B cell (primary cell): ENCODE measurements at regions of chr2 and their contacts with region 1.

Region 1: DNA sequence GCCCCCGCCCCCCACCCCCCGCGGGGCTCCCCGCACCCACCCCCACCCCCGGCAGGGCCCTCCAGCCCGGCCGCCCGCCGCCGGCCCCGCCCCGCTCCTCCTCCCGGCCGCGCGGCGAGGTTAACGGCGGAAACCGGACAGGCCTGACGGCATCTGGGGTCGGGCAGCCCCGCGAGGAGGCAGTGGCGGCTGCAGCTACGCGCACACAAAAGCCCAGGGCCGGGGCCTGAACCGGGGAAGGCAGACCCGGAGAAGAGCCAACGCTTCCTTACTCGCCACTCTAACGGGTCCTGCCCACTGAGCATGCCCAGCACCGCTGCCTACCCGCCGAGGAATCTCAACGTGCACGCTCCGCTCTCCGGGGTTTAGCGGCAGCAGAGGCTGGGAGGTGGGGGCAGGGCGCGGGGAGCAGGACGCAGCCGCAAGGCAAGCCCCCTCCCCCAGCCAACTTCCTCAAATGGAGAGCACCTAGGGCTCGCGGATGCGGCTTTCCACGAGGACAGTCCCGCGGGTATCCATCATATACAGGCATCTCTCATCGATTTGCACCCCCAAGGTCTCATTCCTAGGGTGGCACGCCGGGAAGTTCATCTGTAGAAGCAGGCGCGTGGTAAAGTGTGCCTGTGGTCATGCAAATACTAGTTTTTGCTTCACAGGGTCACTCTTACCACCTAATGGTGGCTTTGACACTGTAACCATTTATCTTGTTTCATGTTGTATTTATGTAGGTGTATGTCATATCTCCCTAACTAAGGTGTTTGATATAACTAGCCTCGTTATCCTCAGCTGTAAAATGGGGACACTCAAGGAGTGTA is at the start of gene MEMO1:
- DNase-seq: peak; percentile 98
- ATAC-seq: peak; percentile 75
- H3K4me3 ChIP-seq: peak within 1 kb of the TSS; percentile 72 to 98 (median 80)
- H3K4me3 Mint-ChIP-seq: peak within 1 kb of the TSS; percentile 98
- H3K27ac ChIP-seq: peak within 1 kb of the TSS; percentile 80 to 94
- H3K27ac Mint-ChIP-seq: peak within 1 kb of the TSS; percentile 99
- H3K4me1 ChIP-seq: peaks cover 29% of the 10 kb centered on the region in 2 donors
- H3K4me1 Mint-ChIP-seq: peaks cover 39% of the 10 kb centered on the region
- H3K27me3 ChIP-seq: no peaks in the 10 kb centered on the region
- H3K27me3 Mint-ChIP-seq: no peaks in the 10 kb centered on the region
- CTCF ChIP-seq: no peak
- total RNA-seq, gene MEMO1: 64.2 and 65.8 TPM in 2 replicates

Region 2: GRCh38 chr2:31980674-31981356 is 30.1 kb before region 1 on chr2:
- CTCF ChIA-PET with region 1: no interaction called
- POLR2A ChIA-PET with region 1: no interaction called
- intact Hi-C with region 1: loop called (anchors 1 kb)
- DNase-seq: peak; percentile 85
- ATAC-seq: peak; percentile 100
- H3K4me3 ChIP-seq: peak overlapping the region in 1 of 5 experiments; percentile 13
- H3K4me3 Mint-ChIP-seq: peak overlapping the region; percentile 57
- H3K27ac ChIP-seq: peak overlapping the region; percentile 81 to 90
- H3K27ac Mint-ChIP-seq: peak overlapping the region; percentile 89
- H3K4me1 ChIP-seq: peaks cover 14 to 16% of the 10 kb centered on the region in 2 donors
- H3K4me1 Mint-ChIP-seq: peaks cover 25% of the 10 kb centered on the region
- H3K27me3 ChIP-seq: no peaks in the 10 kb centered on the region
- H3K27me3 Mint-ChIP-seq: no peaks in the 10 kb centered on the region
- CTCF ChIP-seq: no peak

Region 3: DNA sequence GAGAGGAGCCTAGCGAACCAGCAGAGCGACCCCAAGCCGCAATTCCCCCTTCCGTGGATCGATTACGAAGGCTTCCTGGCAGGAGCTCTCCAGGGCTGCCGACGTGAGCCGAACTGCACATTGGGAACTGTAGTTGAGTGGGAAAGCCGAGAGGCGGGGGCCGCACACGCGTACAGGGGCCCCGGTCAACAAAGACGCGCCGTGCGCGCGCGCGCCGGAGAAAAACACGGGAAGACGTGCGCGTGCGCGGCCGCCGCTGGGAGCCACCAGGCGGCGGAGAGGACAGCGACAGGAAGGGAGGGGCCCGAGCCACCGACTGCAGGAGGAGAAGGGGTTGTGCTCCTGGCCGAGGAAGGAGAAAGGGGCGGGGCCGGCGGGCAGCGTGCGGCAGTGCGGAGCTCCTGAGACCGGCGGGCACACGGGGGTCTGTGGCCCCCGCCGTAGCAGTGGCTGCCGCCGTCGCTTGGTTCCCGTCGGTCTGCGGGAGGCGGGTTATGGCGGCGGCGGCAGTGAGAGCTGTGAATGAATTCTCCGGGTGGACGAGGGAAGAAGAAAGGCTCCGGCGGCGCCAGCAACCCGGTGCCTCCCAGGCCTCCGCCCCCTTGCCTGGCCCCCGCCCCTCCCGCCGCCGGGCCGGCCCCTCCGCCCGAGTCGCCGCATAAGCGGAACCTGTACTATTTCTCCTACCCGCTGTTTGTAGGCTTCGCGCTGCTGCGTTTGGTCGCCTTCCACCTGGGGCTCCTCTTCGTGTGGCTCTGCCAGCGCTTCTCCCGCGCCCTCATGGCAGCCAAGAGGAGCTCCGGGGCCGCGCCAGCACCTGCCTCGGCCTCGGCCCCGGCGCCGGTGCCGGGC is 52.7 kb after region 1 on chr2 and contains the start of gene SPAST:
- CTCF ChIA-PET with region 1: interaction called, 7 read pairs
- POLR2A ChIA-PET with region 1: interaction called, 9 read pairs
- intact Hi-C with region 1: loop called (anchors 1 kb)
- DNase-seq: peak; percentile 99
- ATAC-seq: peak; percentile 90
- H3K4me3 ChIP-seq: peak within 1 kb of the TSS; percentile 83 to 96 (median 89)
- H3K4me3 Mint-ChIP-seq: peak within 1 kb of the TSS; percentile 99
- H3K27ac ChIP-seq: peak within 1 kb of the TSS; percentile 71 to 78
- H3K27ac Mint-ChIP-seq: peak within 1 kb of the TSS; percentile 97
- H3K4me1 ChIP-seq: peaks cover 12 to 21% of the 10 kb centered on the region in 2 donors
- H3K4me1 Mint-ChIP-seq: peaks cover 32% of the 10 kb centered on the region
- H3K27me3 ChIP-seq: no peaks in the 10 kb centered on the region
- H3K27me3 Mint-ChIP-seq: no peaks in the 10 kb centered on the region
- CTCF ChIP-seq: peak; percentile 47
- total RNA-seq, gene SPAST: 26.8 and 28.9 TPM in 2 replicates

Region 4: DNA sequence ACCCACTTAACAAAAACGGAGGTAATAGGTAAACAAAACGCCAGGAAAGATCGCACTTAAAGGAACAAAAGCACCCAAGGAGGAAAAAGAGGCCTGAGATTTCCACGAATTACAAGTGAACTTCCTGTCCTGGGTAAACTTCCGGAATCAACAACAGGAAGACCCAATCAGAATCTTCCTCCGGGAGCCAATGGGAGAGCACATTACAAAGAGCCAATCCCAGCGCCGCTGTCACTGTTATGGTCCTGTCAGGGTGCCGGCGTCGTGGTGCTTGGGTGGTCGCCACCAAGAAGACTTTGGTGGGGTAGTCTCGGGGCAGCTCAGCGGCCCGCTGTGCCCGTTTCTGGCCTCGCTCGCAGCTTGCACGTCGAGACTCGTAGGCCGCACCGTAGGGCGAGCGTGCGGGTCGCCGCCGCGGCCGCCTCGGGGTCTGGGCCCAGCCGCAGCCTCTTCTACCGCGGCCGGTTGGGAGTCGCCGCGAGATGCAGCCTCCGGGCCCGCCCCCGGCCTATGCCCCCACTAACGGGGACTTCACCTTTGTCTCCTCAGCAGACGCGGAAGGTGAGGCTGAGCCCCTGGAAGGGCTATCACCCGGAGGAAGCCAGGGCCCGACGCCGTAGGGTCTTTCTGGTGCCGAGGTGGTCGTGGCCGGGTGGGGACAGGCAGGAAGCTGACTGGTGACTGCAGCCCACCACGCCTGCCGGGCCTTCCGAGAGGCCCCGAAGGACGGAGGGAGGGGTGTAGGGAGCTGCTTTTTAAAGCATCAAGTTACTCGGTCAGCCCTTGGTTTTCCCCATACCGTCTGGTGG is 267.0 kb after region 1 on chr2 and contains the start of gene YIPF4:
- CTCF ChIA-PET with region 1: no interaction called
- POLR2A ChIA-PET with region 1: no interaction called
- intact Hi-C with region 1: loop called (anchors 2 kb)
- DNase-seq: peak; percentile 96
- ATAC-seq: peak; percentile 98
- H3K4me3 ChIP-seq: peak within 1 kb of the TSS; percentile 70 to 98 (median 94)
- H3K4me3 Mint-ChIP-seq: peak within 1 kb of the TSS; percentile 91
- H3K27ac ChIP-seq: peak within 1 kb of the TSS; percentile 66 to 95
- H3K27ac Mint-ChIP-seq: peak within 1 kb of the TSS; percentile 97
- H3K4me1 ChIP-seq: peaks cover 12 to 20% of the 10 kb centered on the region in 2 donors
- H3K4me1 Mint-ChIP-seq: peaks cover 23% of the 10 kb centered on the region
- H3K27me3 ChIP-seq: no peaks in the 10 kb centered on the region
- H3K27me3 Mint-ChIP-seq: peaks cover 12% of the 10 kb centered on the region
- CTCF ChIP-seq: no peak
- total RNA-seq, gene YIPF4: 38.0 and 42.4 TPM in 2 replicates

Region 5: DNA sequence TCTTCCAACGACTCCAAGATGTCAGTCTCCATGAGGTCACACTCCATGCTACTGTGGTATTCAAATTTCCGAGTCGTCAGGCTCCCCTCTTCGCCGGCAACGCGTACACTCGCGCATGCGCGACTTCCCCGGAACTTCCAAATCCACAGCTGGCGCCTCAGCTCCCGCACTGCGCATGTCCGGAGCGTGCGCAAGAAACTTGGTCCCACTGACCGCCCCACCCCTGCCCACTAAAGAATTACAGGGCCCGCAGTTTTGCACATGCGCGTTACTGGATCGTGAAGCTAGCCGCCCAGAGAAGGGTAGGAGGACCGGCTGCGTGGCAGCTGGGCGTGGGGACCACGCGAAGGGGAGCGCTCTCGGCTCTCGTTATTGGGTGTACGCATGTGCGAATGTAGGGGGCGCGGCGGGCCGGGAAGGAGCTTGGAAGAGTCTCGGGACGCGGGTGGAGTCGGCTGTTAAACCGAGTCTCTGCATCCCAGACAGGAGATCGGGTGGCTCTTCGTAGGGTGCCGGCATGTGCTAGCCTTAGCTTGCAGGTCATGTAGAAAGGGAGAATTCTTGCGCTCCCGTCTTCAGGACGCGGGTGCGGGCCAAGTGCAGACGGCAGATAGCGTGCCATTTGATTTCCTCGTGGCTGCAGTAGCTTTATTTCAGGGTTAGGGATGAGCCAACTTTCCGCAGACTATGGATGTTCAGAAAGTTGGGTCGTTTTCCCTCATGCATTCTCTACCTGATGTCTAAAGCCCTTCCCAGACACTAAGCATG is 1588.5 kb after region 1 on chr2 and contains the start of gene FAM98A:
- CTCF ChIA-PET with region 1: no interaction called
- POLR2A ChIA-PET with region 1: no interaction called
- intact Hi-C with region 1: loop called (anchors 1 kb)
- DNase-seq: peak; percentile 99
- ATAC-seq: peak; percentile 94
- H3K4me3 ChIP-seq: peak within 1 kb of the TSS; percentile 78 to 99 (median 90)
- H3K4me3 Mint-ChIP-seq: peak within 1 kb of the TSS; percentile 97
- H3K27ac ChIP-seq: peak within 1 kb of the TSS; percentile 88 to 90
- H3K27ac Mint-ChIP-seq: peak within 1 kb of the TSS; percentile 94
- H3K4me1 ChIP-seq: peaks cover 16% of the 10 kb centered on the region in 2 donors
- H3K4me1 Mint-ChIP-seq: peaks cover 31% of the 10 kb centered on the region
- H3K27me3 ChIP-seq: no peaks in the 10 kb centered on the region
- H3K27me3 Mint-ChIP-seq: no peaks in the 10 kb centered on the region
- CTCF ChIP-seq: no peak
- total RNA-seq, gene FAM98A: 29.4 and 32.1 TPM in 2 replicates